HepG2 (cell line): ENCODE measurements at regions of chr10 and their contacts with region 1.

Region 1: GRCh38 chr10:35752469-35753450 is 110.7 kb upstream of the FZD8 start:
- DNase-seq: no peak
- ATAC-seq: no peak
- H3K4me3 ChIP-seq: no peak overlapping the region
- H3K27ac ChIP-seq: no peak overlapping the region
- H3K4me1 ChIP-seq: peaks cover 22% of the 10 kb centered on the region; the same call in 1 of the 2 replicates
- H3K27me3 ChIP-seq: no peaks in the 10 kb centered on the region; a peak in 1 of 5 replicates
- CTCF ChIP-seq: no peak
- EP300 ChIP-seq: no peak
- POLR2A ChIP-seq: no peak
- RAD21 ChIP-seq: no peak

Region 2: GRCh38 chr10:35711615-35712411 is 40.9 kb before region 1 on chr10:
- CTCF ChIA-PET with region 1: no interaction called
- POLR2A ChIA-PET with region 1: no interaction called
- in situ Hi-C with region 1: no loop called
- intact Hi-C with region 1: no loop called
- DNase-seq: no peak
- ATAC-seq: no peak
- H3K4me3 ChIP-seq: no peak overlapping the region
- H3K27ac ChIP-seq: no peak overlapping the region
- H3K4me1 ChIP-seq: no peaks in the 10 kb centered on the region
- H3K27me3 ChIP-seq: peaks cover 0 to 10% of the 10 kb centered on the region in 2 experiments; a peak in 2 of 5 replicates
- CTCF ChIP-seq: no peak
- EP300 ChIP-seq: no peak
- POLR2A ChIP-seq: no peak
- RAD21 ChIP-seq: no peak

Region 3: DNA sequence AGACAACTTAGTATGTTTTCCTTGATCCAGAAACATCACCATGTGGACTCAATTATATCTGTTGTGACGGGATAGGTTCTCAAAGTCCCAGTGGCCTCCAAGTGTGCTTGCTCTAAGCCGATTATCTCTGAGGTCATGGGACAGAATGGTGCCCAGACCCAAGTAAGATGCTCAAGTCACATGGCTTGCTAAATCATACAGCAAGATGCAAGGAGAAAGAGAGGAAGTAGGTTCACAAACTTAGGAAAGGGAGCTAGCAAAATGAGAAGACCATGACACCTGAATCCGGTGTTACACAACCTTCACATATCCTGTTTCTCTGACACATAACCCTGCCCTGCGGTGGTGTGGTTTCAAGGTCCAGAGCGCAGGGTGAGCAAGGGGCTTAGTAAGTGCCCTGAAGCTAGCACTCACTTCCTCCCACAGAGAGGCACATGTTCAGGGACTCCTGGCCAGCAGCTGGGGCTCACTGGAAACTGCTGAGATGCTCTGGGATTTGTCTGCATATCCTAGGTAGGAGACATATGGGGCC is 781.8 kb after region 1 on chr10:
- CTCF ChIA-PET with region 1: no interaction called
- POLR2A ChIA-PET with region 1: no interaction called
- in situ Hi-C with region 1: no loop called
- intact Hi-C with region 1: loop called (anchors 5 kb)
- DNase-seq: no peak
- ATAC-seq: peak; percentile 50; the same call in 2 of the 3 replicates
- H3K4me3 ChIP-seq: no peak overlapping the region
- H3K27ac ChIP-seq: no peak overlapping the region
- H3K4me1 ChIP-seq: no peaks in the 10 kb centered on the region
- H3K27me3 ChIP-seq: no peaks in the 10 kb centered on the region
- CTCF ChIP-seq: no peak
- EP300 ChIP-seq: no peak
- POLR2A ChIP-seq: no peak
- RAD21 ChIP-seq: no peak